Activated T-helper 2 cell treated with anti-CD3 and anti-CD28 coated beads, Interferon-gamma antibody, Interleukin-2, Interleukin-4, amounts not matched to agents 10 μg/mL and 5 μg/mL and 100 μg/mL, durations not matched to agents 14 hours and 24 hours and 36 hours (primary cell): ENCODE measurements at regions of chr6 and their contacts with region 1.

Region 1: GRCh38 chr6:2818593-2818992 is 23.1 kb downstream of the SERPINB1 start:
- DNase-seq: no peak
- H3K4me3 Mint-ChIP-seq: no peak overlapping the region
- H3K27ac Mint-ChIP-seq: no peak overlapping the region
- H3K4me1 Mint-ChIP-seq: peaks cover 33% of the 10 kb centered on the region
- H3K27me3 Mint-ChIP-seq: no peaks in the 10 kb centered on the region

Region 2: DNA sequence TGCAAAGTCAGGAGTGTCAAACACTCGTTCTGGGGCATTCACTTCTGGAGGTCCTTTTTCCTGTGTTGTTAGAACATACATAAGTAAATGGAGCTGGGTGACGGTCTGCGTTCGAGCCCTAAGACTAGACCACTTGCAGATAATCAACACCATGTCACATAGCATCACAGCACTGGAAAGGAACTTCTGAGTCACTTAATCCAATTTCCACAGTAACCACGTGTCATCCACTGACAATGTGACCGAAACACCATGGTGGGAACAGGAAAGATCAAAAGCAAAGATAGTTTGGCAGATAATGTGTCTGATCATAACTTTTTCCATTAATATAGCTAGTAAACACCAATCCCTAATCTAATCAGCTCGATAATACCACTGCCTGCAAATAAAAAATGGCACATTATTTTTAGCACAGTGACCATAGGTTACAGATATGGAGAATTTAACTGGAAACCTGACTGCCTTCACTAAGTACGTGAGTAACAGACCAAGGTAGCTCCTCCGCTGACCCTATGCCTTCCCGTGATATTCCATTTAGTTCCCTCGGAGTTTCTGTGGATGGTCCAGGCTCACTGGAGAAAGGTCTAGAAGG is 18.6 kb before region 1 on chr6:
- intact Hi-C with region 1: loop called (anchors 2 kb)
- DNase-seq: no peak
- H3K4me3 Mint-ChIP-seq: no peak overlapping the region
- H3K27ac Mint-ChIP-seq: peak overlapping the region; percentile 90
- H3K4me1 Mint-ChIP-seq: peaks cover 46% of the 10 kb centered on the region
- H3K27me3 Mint-ChIP-seq: no peaks in the 10 kb centered on the region